HepG2 (cell line): ENCODE measurements at regions of chr6 and their contacts with region 1.

Region 1: DNA sequence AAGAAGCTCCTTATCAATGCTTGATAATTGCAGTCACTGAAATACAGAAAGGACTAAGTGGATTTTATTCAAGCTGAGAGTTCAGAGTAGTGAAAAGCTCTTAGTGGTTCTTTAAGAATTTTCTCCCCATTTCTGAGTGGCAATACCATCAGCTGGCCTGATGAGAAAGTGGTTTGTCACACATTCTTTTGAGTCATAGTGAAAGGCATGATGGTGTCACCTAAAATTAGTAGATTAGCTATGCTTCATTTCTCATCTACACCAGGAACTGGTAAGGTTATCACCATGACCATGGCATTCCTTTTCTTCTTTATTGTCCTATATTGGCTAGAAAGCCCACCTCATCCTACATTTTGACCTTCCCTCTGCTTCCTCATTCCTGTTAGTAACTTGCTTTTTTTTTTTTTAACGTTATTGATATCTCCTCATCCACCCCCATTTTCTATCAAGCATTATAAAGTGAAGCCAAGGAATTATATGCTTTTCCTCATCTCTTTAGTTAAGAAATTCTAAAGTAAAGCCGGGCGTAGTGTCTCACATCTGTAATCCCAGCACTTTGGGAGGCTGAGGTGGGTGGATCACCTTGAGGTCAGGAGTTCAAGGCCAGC is 67.4 kb upstream of the LOC128125822 start:
- DNase-seq: no peak
- ATAC-seq: no peak
- H3K4me3 ChIP-seq: no peak overlapping the region
- H3K27ac ChIP-seq: no peak overlapping the region
- H3K4me1 ChIP-seq: peaks cover 68% of the 10 kb centered on the region
- H3K27me3 ChIP-seq: no peaks in the 10 kb centered on the region
- CTCF ChIP-seq: no peak
- EP300 ChIP-seq: no peak
- POLR2A ChIP-seq: no peak
- RAD21 ChIP-seq: no peak

Region 2: GRCh38 chr6:63391203-63391970 is 113.5 kb before region 1 on chr6:
- CTCF ChIA-PET with region 1: no interaction called
- POLR2A ChIA-PET with region 1: interaction called, 7 read pairs
- in situ Hi-C with region 1: no loop called
- intact Hi-C with region 1: loop called (anchors 2 kb)
- DNase-seq: peak; percentile 99
- ATAC-seq: peak; percentile 95
- H3K4me3 ChIP-seq: no peak overlapping the region
- H3K27ac ChIP-seq: peak overlapping the region; percentile 83
- H3K4me1 ChIP-seq: peaks cover 56% of the 10 kb centered on the region
- H3K27me3 ChIP-seq: no peaks in the 10 kb centered on the region
- CTCF ChIP-seq: no peak
- EP300 ChIP-seq: peak; percentile 34 to 99; a peak in 2 of 4 replicates
- POLR2A ChIP-seq: 0 out of 4 replicates have a peak, but pooled peaks of 1 of the 2 experiments have one; percentile 18
- RAD21 ChIP-seq: peak; percentile 63

Region 3: DNA sequence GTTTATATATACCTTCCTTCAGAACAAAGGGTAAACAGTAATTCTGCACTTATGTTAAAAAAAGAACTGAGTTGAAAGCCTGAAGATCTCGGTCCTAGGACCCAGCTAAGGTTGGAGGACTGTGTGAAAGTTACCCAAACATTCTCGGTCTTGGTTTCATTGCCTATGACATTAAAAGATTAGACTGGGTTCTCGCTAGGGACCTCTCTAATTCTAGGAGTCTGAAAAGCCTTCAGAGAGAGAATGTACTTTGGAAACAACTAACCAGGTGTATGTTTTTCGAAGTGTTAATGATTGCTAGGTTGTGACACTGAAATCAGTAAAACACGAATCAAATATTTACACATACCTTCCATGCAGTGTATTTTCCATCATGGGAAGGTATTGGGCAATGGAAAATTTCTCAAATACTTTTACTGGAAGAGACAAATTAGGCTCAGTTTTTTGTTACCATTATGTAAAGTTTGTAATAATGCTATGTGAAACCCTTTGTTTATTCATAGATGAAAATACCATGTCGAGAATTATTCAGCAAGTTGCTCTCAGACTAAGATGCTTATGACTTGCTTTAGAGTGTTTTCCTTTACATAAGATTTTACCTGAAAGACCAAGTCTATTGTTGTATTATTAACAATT is 46.3 kb before region 1 on chr6:
- CTCF ChIA-PET with region 1: no interaction called
- POLR2A ChIA-PET with region 1: interaction called, 15 read pairs
- in situ Hi-C with region 1: no loop called
- intact Hi-C with region 1: loop called (anchors 1 kb)
- DNase-seq: peak; percentile 99
- ATAC-seq: peak; percentile 99
- H3K4me3 ChIP-seq: peak overlapping the region in 2 of 3 experiments; percentile 13 to 14; a peak in 2 of 6 replicates
- H3K27ac ChIP-seq: peak overlapping the region; percentile 96
- H3K4me1 ChIP-seq: peaks cover 89% of the 10 kb centered on the region
- H3K27me3 ChIP-seq: no peaks in the 10 kb centered on the region
- CTCF ChIP-seq: no peak
- EP300 ChIP-seq: peak; percentile 99 to 100
- POLR2A ChIP-seq: peak; percentile 53 to 81; a peak in 3 of 4 replicates
- RAD21 ChIP-seq: no peak

Region 4: DNA sequence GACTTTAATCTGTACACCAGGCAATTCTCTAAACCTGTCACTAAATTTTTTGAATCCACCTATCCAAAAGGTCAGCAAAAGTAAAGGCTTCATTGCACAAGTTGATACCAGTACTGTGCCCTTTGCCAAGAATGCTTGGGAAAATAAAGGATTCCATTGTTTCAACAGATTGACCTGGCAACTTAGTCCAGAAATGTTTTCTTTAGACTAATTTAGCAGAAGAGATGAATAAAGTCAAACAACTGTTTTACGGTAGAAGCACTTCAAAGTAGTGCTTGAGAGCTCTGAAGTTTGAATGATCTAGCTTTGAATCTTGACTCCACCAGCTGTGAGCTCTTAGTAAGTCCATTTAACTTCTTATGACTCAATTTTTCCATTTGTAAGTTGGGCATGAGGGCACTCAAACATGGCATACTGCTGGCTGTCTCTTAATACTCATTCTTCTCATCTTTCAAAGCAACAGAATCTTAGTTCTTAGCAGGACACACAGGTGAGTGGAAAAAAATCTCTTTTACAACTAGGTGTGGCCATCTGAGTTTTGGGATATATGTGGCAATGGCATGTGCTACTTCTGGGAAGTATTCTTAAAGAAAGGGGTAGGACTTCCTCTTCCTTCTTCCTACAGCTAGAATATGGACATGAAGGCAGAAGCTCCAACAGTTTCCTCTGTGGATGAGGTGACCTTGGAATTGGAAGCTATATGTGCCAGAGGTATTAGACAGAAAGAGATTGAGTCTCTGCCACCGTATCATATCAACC is 11.5 kb after region 1 on chr6:
- CTCF ChIA-PET with region 1: no interaction called
- POLR2A ChIA-PET with region 1: interaction called, 46 read pairs
- in situ Hi-C with region 1: no loop called
- intact Hi-C with region 1: no loop called
- DNase-seq: peak; percentile 100
- ATAC-seq: peak; percentile 51
- H3K4me3 ChIP-seq: peak overlapping the region; percentile 38 to 62 (median 38); a peak in 5 of 6 replicates
- H3K27ac ChIP-seq: peak overlapping the region; percentile 97
- H3K4me1 ChIP-seq: peaks cover 96% of the 10 kb centered on the region
- H3K27me3 ChIP-seq: no peaks in the 10 kb centered on the region
- CTCF ChIP-seq: 0 out of 2 replicates have a peak, but pooled peaks have one; percentile 3
- EP300 ChIP-seq: peak; percentile 73 to 99; a peak in 3 of 4 replicates
- POLR2A ChIP-seq: peak in 1 of 2 experiments; percentile 66; a peak in 2 of 4 replicates
- RAD21 ChIP-seq: peak; percentile 41; the same call in 1 of the 2 replicates

Region 5: DNA sequence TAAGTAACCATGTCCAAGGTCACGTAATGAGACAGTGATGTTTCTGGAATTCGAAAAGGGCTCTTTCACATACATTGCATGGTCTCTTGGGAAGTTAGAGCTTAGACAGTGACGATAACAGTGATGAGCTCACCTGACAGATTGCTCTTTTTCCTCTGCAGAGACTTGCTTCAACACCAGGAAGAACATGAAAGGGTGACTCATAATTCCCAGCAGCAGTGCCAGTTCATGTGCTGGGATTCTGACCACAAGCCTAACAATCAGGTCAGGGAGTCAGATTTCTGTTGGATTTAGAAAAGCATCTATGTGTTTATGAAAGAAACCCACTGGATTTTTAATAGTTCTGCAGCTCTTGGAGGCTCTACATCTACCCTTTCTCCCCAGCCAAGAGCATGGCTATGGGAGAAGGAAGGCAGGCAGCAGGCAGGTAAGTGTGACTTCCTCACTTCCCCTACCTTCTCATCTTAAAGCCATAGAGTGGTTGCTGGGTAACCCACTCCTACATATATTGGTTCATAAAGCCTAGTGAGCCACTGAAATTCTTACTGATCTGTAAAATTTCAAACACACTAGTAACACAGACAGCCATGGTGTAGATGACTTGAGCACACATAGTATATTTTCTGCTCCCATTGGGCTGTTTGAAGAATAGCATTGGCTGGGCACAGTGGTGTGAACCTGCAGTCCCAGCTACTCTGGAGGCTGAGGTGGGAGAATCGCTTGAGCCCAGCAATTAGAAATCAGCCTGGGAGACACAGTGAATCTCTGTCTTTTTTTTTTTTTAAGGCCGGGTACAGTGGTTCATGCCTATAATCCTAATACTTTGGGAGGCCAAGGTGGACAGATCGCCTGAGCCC is 23.0 kb after region 1 on chr6:
- CTCF ChIA-PET with region 1: no interaction called
- POLR2A ChIA-PET with region 1: interaction called, 46 read pairs
- in situ Hi-C with region 1: no loop called
- intact Hi-C with region 1: loop called (anchors 1 kb)
- DNase-seq: peak; percentile 99
- ATAC-seq: peak; percentile 92
- H3K4me3 ChIP-seq: peak overlapping the region in 1 of 3 experiments; percentile 8; a peak in 1 of 6 replicates
- H3K27ac ChIP-seq: peak overlapping the region; percentile 82
- H3K4me1 ChIP-seq: peaks cover 80% of the 10 kb centered on the region
- H3K27me3 ChIP-seq: no peaks in the 10 kb centered on the region
- CTCF ChIP-seq: no peak
- EP300 ChIP-seq: peak; percentile 79 to 96; a peak in 3 of 4 replicates
- POLR2A ChIP-seq: peak in 1 of 2 experiments; percentile 34; a peak in 1 of 4 replicates
- RAD21 ChIP-seq: 0 out of 2 replicates have a peak, but pooled peaks have one; percentile 14

Region 6: GRCh38 chr6:63663147-63663877 is 158.4 kb after region 1 on chr6:
- CTCF ChIA-PET with region 1: no interaction called
- POLR2A ChIA-PET with region 1: no interaction called
- in situ Hi-C with region 1: no loop called
- intact Hi-C with region 1: no loop called
- DNase-seq: no peak
- ATAC-seq: peak; percentile 37; the same call in 1 of the 3 replicates
- H3K4me3 ChIP-seq: no peak overlapping the region
- H3K27ac ChIP-seq: no peak overlapping the region
- H3K4me1 ChIP-seq: peaks cover 24% of the 10 kb centered on the region
- H3K27me3 ChIP-seq: no peaks in the 10 kb centered on the region
- CTCF ChIP-seq: no peak
- EP300 ChIP-seq: no peak
- POLR2A ChIP-seq: no peak
- RAD21 ChIP-seq: no peak